Common myeloid progenitor, CD34-positive (primary cell): ENCODE measurements at regions of chr21 and their contacts with region 1.

Region 1: DNA sequence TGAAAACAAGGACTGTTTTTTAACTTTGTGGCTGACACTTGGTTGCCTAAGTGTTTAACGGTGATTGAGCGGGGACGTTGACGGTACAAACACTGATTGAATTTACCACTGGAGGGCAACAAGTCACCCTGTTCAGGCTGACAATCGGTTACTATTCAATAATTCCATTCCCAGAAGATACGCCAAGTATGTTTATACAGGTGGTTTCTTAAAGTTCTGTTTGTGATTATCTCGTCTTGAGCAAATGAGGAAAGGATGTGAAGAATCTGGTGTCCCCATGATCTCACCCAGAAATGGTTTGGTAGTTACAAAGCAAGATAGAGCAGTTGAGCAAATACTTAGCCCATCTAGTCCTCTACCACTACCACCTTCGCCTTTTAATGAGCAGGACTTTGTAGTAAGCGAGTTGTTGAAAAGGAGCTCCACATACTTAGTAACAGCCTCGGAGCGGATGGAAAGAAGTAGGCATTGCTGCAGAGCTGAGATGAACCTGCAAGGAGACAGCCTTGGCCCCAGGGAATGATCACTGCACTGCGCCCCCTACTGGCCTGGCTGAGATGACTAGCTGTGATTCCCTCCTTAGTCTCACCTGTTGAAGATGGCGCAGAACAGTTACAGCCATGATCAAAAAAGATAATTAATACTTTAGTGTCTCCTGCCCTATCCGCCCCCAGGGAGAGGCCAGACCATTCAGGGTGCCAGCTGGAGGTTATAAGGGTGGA is 36.3 kb downstream of the IFNAR1 start:
- DNase-seq: peak; percentile 72 to 79 (median 76)
- H3K4me3 ChIP-seq: peak overlapping the region in 6 of 7 experiments; percentile 23 to 79 (median 66)
- H3K27ac ChIP-seq: peak overlapping the region in 1 of 2 experiments; percentile 70
- H3K4me1 ChIP-seq: peaks cover 9 to 25% (median 21%) of the 10 kb centered on the region in 4 experiments
- H3K27me3 ChIP-seq: no peaks in the 10 kb centered on the region

Region 2: GRCh38 chr21:33286600-33287456 is 74.2 kb before region 1 on chr21:
- CTCF ChIA-PET with region 1: no interaction called
- POLR2A ChIA-PET with region 1: no interaction called
- DNase-seq: no peak
- H3K4me3 ChIP-seq: no peak overlapping the region
- H3K27ac ChIP-seq: no peak overlapping the region
- H3K4me1 ChIP-seq: no peaks in the 10 kb centered on the region
- H3K27me3 ChIP-seq: no peaks in the 10 kb centered on the region

Region 3: GRCh38 chr21:33324291-33325221 is 36.5 kb before region 1 on chr21 and contains the start of gene IFNAR1:
- CTCF ChIA-PET with region 1: interaction called, 14 read pairs
- POLR2A ChIA-PET with region 1: interaction called, 3 read pairs
- DNase-seq: peak; percentile 99
- H3K4me3 ChIP-seq: peak within 1 kb of the TSS; percentile 75 to 98 (median 93)
- H3K27ac ChIP-seq: peak within 1 kb of the TSS; percentile 79 to 94
- H3K4me1 ChIP-seq: peaks cover 10 to 26% (median 13%) of the 10 kb centered on the region in 4 experiments
- H3K27me3 ChIP-seq: no peaks in the 10 kb centered on the region

Region 4: DNA sequence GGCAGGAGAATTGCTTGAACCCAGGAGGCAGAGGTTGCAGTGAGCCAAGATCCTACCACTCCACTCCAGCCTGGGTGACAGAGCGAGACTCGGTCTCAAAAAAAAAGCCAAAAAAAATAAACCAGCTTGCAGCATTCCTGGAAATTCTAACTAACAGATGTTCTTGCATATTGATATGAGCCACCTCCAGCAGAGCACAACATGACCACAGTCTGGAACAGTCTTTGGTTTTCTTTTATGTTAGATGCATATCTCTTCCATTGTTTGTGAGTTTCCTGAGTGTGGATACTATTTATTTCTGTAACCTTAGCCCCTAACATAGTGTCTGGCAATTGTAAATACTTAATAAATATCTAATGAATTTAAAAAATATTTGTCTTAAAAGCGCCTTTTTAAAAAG is 12.3 kb before region 1 on chr21:
- CTCF ChIA-PET with region 1: interaction called, 19 read pairs
- POLR2A ChIA-PET with region 1: interaction called, 3 read pairs
- DNase-seq: no peak
- H3K4me3 ChIP-seq: no peak overlapping the region
- H3K27ac ChIP-seq: no peak overlapping the region
- H3K4me1 ChIP-seq: no peaks in the 10 kb centered on the region
- H3K27me3 ChIP-seq: no peaks in the 10 kb centered on the region

Region 5: DNA sequence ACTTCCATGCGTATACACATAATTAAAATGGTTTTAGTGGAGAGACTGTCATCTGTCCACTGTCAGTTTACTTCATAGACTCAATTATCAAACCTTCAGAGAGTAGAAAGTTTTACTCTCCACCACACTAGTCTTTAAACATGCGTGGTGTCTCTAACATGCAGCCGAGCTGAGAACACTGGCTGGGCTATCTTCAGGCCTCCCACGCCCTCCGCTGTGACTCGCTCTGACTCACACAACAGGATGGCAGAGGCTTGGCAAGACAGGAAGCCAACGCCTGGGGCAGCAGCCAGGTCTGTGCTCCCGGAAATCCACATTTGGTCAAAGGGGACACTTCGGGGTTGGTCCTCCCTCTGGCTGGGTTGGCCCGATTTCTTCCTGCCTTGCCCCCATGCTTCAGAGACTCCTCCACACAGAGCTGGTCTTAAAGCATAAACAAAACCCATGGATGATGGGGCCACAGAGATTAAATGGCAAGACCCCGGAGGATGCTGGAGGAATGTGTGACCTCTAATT is 19.5 kb after region 1 on chr21:
- CTCF ChIA-PET with region 1: interaction called, 25 read pairs
- POLR2A ChIA-PET with region 1: interaction called, 3 read pairs
- DNase-seq: peak; percentile 81 to 95 (median 92)
- H3K4me3 ChIP-seq: peak overlapping the region in 2 of 7 experiments; percentile 23 to 26
- H3K27ac ChIP-seq: peak overlapping the region in 1 of 2 experiments; percentile 78
- H3K4me1 ChIP-seq: peaks cover 10 to 55% (median 41%) of the 10 kb centered on the region in 4 experiments
- H3K27me3 ChIP-seq: no peaks in the 10 kb centered on the region

Region 6: GRCh38 chr21:33444499-33444898 is 83.5 kb after region 1 on chr21:
- CTCF ChIA-PET with region 1: interaction called, 26 read pairs
- POLR2A ChIA-PET with region 1: no interaction called
- DNase-seq: no peak
- H3K4me3 ChIP-seq: no peak overlapping the region
- H3K27ac ChIP-seq: no peak overlapping the region
- H3K4me1 ChIP-seq: no peaks in the 10 kb centered on the region
- H3K27me3 ChIP-seq: no peaks in the 10 kb centered on the region

Region 7: GRCh38 chr21:33566514-33566913 is 205.5 kb after region 1 on chr21:
- CTCF ChIA-PET with region 1: no interaction called
- POLR2A ChIA-PET with region 1: no interaction called
- DNase-seq: no peak
- H3K4me3 ChIP-seq: no peak overlapping the region
- H3K27ac ChIP-seq: no peak overlapping the region
- H3K4me1 ChIP-seq: no peaks in the 10 kb centered on the region
- H3K27me3 ChIP-seq: no peaks in the 10 kb centered on the region

Region 8: GRCh38 chr21:33789697-33790096 is 428.7 kb after region 1 on chr21:
- CTCF ChIA-PET with region 1: no interaction called
- POLR2A ChIA-PET with region 1: no interaction called
- DNase-seq: no peak
- H3K4me3 ChIP-seq: no peak overlapping the region
- H3K27ac ChIP-seq: no peak overlapping the region
- H3K4me1 ChIP-seq: no peaks in the 10 kb centered on the region
- H3K27me3 ChIP-seq: no peaks in the 10 kb centered on the region